ENCODE measurements at regions of chr1 and their contacts with region 1.

Region 1: GRCh38 chr1:212315907-212316306 is 30.7 kb downstream of the PPP2R5A start:
- DNase-seq: no peak
- H3K4me3 Mint-ChIP-seq: no peak overlapping the region
- H3K27ac Mint-ChIP-seq: no peak overlapping the region
- H3K4me1 Mint-ChIP-seq: peaks cover 24% of the 10 kb centered on the region
- H3K27me3 Mint-ChIP-seq: no peaks in the 10 kb centered on the region

Region 2: GRCh38 chr1:212062832-212063438 is 253.0 kb before region 1 on chr1:
- intact Hi-C with region 1: loop called (anchors 2 kb)
- DNase-seq: no peak
- H3K4me3 Mint-ChIP-seq: no peak overlapping the region
- H3K27ac Mint-ChIP-seq: no peak overlapping the region
- H3K4me1 Mint-ChIP-seq: no peaks in the 10 kb centered on the region
- H3K27me3 Mint-ChIP-seq: no peaks in the 10 kb centered on the region

Region 3: GRCh38 chr1:212328248-212328647 is 12.3 kb after region 1 on chr1:
- intact Hi-C with region 1: loop called (anchors 1 kb)
- DNase-seq: no peak
- H3K4me3 Mint-ChIP-seq: no peak overlapping the region
- H3K27ac Mint-ChIP-seq: no peak overlapping the region
- H3K4me1 Mint-ChIP-seq: peaks cover 1% of the 10 kb centered on the region
- H3K27me3 Mint-ChIP-seq: no peaks in the 10 kb centered on the region

Region 4: GRCh38 chr1:212608209-212608955 is 292.5 kb after region 1 on chr1 and contains the start of gene ATF3:
- intact Hi-C with region 1: no loop called
- DNase-seq: peak; percentile 90
- H3K4me3 Mint-ChIP-seq: peak within 1 kb of the TSS; percentile 95
- H3K27ac Mint-ChIP-seq: peak within 1 kb of the TSS; percentile 97
- H3K4me1 Mint-ChIP-seq: peaks cover 63% of the 10 kb centered on the region
- H3K27me3 Mint-ChIP-seq: peaks cover 36% of the 10 kb centered on the region
- total RNA-seq, gene ATF3: 23.0 and 23.3 TPM in 2 replicates

Measured in activated T-helper 1 cell treated with anti-CD3 and anti-CD28 coated beads, Interleukin-12 subunit alpha, Interleukin-12 subunit beta, Interleukin-2, Interleukin-4 antibody, amounts not matched to agents 30 ng/mL and 10 ng/mL and 1 ng/mL, durations not matched to agents 14 hours and 24 hours and 36 hours (primary cell).